Endothelial cell of umbilical vein (primary cell): ENCODE measurements at regions of chr16 and their contacts with region 1.

Region 1: DNA sequence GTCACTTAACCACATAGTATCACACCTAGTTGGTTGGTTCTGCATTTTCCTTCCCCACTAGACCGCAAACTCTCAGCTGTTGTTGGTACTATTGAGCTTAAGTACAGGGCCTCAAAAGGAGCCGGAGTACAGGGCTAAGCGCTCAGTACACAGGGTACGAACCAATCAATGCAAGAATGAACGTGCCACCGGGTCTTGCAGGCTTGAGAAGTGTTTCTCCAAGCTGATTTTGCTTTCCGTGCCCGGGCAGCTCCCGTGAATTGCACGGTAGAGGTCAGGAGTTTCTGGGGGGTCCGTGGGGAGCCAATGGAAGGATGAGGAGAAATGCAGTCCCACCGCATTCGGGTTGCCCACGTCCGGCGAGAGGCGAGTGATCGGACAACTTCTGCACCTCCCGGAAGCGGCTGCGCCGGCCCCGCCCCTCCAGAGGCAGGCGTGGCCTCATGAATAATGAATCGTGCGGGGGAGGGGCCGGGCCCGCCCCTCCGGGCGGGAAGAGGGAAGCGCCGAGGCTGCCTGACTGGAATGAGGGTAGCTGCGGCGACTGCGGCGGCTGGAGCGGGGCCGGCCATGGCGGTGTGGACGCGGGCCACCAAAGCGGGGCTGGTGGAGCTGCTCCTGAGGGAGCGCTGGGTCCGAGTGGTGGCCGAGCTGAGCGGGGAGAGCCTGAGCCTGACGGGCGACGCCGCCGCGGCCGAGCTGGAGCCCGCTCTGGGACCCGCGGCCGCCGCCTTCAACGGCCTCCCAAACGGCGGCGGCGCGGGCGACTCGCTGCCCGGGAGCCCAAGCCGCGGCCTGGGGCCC is at the start of gene SNTB2:
- DNase-seq: peak; percentile 87
- H3K4me3 ChIP-seq: peak within 1 kb of the TSS; percentile 82 to 93 (median 90)
- H3K27ac ChIP-seq: peak within 1 kb of the TSS; percentile 18
- H3K4me1 ChIP-seq: peaks cover 33% of the 10 kb centered on the region
- H3K27me3 ChIP-seq: no peaks in the 10 kb centered on the region
- CTCF ChIP-seq: no peak
- POLR2A ChIP-seq: peak; percentile 98
- total RNA-seq, gene SNTB2: 73.7 and 76.2 TPM in 2 replicates

Region 2: GRCh38 chr16:69171325-69172084 is 15.3 kb before region 1 on chr16:
- CTCF ChIA-PET with region 1: interaction called, 9 read pairs
- POLR2A ChIA-PET with region 1: no interaction called
- dilution Hi-C with region 1: no loop called
- intact Hi-C with region 1: loop called (anchors 1 kb)
- DNase-seq: no peak
- H3K4me3 ChIP-seq: no peak overlapping the region
- H3K27ac ChIP-seq: no peak overlapping the region
- H3K4me1 ChIP-seq: peaks cover 38% of the 10 kb centered on the region
- H3K27me3 ChIP-seq: no peaks in the 10 kb centered on the region
- CTCF ChIP-seq: no peak
- POLR2A ChIP-seq: no peak

Region 3: GRCh38 chr16:69223882-69224281 is 37.0 kb after region 1 on chr16:
- CTCF ChIA-PET with region 1: interaction called, 9 read pairs
- POLR2A ChIA-PET with region 1: no interaction called
- dilution Hi-C with region 1: no loop called
- intact Hi-C with region 1: loop called (anchors 1 kb)
- DNase-seq: no peak
- H3K4me3 ChIP-seq: no peak overlapping the region
- H3K27ac ChIP-seq: peak overlapping the region; percentile 98
- H3K4me1 ChIP-seq: peaks cover 70% of the 10 kb centered on the region
- H3K27me3 ChIP-seq: no peaks in the 10 kb centered on the region
- CTCF ChIP-seq: no peak
- POLR2A ChIP-seq: no peak

Region 4: GRCh38 chr16:69286941-69287713 is 100.3 kb after region 1 on chr16:
- CTCF ChIA-PET with region 1: interaction called, 17 read pairs
- POLR2A ChIA-PET with region 1: interaction called, 4 read pairs
- dilution Hi-C with region 1: no loop called
- intact Hi-C with region 1: loop called (anchors 1 kb)
- DNase-seq: peak; percentile 84
- H3K4me3 ChIP-seq: no peak overlapping the region
- H3K27ac ChIP-seq: no peak overlapping the region
- H3K4me1 ChIP-seq: peaks cover 8% of the 10 kb centered on the region
- H3K27me3 ChIP-seq: no peaks in the 10 kb centered on the region
- CTCF ChIP-seq: peak; percentile 14 to 22
- POLR2A ChIP-seq: no peak

Region 5: GRCh38 chr16:69465083-69465721 is 278.4 kb after region 1 on chr16:
- CTCF ChIA-PET with region 1: no interaction called
- POLR2A ChIA-PET with region 1: no interaction called
- dilution Hi-C with region 1: no loop called
- intact Hi-C with region 1: no loop called
- DNase-seq: peak; percentile 26
- H3K4me3 ChIP-seq: no peak overlapping the region
- H3K27ac ChIP-seq: no peak overlapping the region
- H3K4me1 ChIP-seq: peaks cover 34% of the 10 kb centered on the region
- H3K27me3 ChIP-seq: no peaks in the 10 kb centered on the region
- CTCF ChIP-seq: peak in 1 of 2 donors; percentile 6
- POLR2A ChIP-seq: no peak

Region 6: DNA sequence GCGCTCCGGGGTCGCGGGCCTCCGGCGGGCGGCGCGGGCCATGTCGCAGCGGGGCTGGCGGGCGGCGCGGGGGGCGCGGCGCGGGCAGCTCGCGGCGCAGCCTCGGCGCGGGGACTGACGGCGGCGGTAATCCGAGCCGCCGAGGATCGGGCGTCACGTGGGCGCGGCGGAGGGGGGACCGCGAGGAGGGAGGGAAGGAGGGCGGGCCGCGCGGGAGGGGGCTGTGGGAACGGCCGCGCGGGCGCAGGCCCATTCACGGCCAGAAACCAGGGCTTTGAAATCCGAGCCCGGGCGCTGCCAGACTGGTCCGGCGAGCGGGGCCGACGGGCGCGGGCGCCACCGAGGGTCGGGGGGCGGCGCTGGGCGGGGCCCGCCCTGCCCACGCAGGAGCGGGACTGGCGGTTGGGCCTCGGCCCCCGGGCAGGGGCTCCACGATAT is 1499.1 kb after region 1 on chr16 and contains the start of gene MTSS2:
- CTCF ChIA-PET with region 1: no interaction called
- POLR2A ChIA-PET with region 1: no interaction called
- dilution Hi-C with region 1: no loop called
- intact Hi-C with region 1: loop called (anchors 5 kb)
- DNase-seq: peak; percentile 89
- H3K4me3 ChIP-seq: peak within 1 kb of the TSS; percentile 58 to 94 (median 61)
- H3K27ac ChIP-seq: peak within 1 kb of the TSS; percentile 34
- H3K4me1 ChIP-seq: peaks cover 21% of the 10 kb centered on the region
- H3K27me3 ChIP-seq: no peaks in the 10 kb centered on the region
- CTCF ChIP-seq: no peak
- POLR2A ChIP-seq: peak; percentile 49
- total RNA-seq, gene MTSS2: 37.6 and 42.3 TPM in 2 replicates